ENCODE measurements at regions of chr2 and their contacts with region 1.

Region 1: GRCh38 chr2:32010670-32011484 is at the start of gene MEMO1:
- DNase-seq: peak; percentile 84 to 93 (median 90)
- H3K4me3 ChIP-seq: peak within 1 kb of the TSS; percentile 54 to 97 (median 85)
- H3K27ac ChIP-seq: peak within 1 kb of the TSS; percentile 18 to 97 (median 94)
- H3K27me3 ChIP-seq: no peaks in the 10 kb centered on the region
- CTCF ChIP-seq: peak in 6 of 56 donors; percentile 8 to 25 (median 15)
- total RNA-seq, gene MEMO1: 35.6 to 60.5 (median 46.8) TPM

Region 2: GRCh38 chr2:32039447-32040219 is 28.8 kb after region 1 on chr2 and contains the start of gene DPY30:
- intact Hi-C with region 1: loop called in 1 of 2 experiments (anchors 2 kb)
- DNase-seq: peak; percentile 86 to 95 (median 92)
- H3K4me3 ChIP-seq: peak within 1 kb of the TSS; percentile 57 to 98 (median 88)
- H3K27ac ChIP-seq: peak within 1 kb of the TSS; percentile 42 to 96 (median 87)
- H3K27me3 ChIP-seq: no peaks in the 10 kb centered on the region
- CTCF ChIP-seq: peak in 52 of 56 donors; percentile 2 to 65 (median 32)
- total RNA-seq, gene DPY30: 36.9 to 75.5 (median 60.6) TPM

Measured in dorsolateral prefrontal cortex (tissue), 120 donors.